ENCODE measurements at regions of chr2 and their contacts with region 1.

Region 1: GRCh38 chr2:32010670-32011484 is at the start of gene MEMO1:
- DNase-seq: peak; percentile 89
- H3K4me3 Mint-ChIP-seq: peak within 1 kb of the TSS; percentile 92
- H3K27ac Mint-ChIP-seq: peak within 1 kb of the TSS; percentile 97
- H3K4me1 Mint-ChIP-seq: peaks cover 41% of the 10 kb centered on the region
- H3K27me3 Mint-ChIP-seq: no peaks in the 10 kb centered on the region
- total RNA-seq, gene MEMO1: 66.6 and 71.3 TPM in 2 replicates

Region 2: DNA sequence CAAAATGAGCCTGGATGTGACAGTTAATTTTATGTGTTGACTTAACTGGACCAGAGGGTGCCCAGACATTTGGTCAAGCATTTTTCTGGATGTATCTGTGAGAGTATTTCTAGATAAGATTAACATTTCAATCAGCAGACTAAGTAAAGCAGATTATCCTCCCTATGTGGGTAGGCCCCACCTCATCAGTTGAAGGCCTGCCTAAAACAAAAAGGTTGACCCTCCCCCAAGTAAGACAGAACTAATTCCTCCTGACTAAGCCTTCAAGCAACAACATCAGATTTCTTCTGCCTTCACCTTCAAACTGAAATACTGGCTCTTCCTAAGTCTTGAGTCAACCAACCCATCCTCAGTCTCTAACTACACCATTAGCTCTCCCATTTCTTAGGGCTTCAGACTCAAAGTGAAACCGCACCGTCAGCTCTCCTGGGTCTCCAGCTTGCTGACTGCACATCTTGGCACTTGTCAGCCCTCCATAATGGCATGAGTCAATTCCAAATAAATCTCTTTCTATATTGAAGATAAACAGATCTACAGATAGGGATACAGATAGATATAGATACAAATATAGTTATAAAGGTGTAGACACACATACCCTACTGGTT is 48.0 kb before region 1 on chr2:
- intact Hi-C with region 1: loop called (anchors 5 kb)
- DNase-seq: peak; percentile 3
- H3K4me3 Mint-ChIP-seq: no peak overlapping the region
- H3K27ac Mint-ChIP-seq: peak overlapping the region; percentile 82
- H3K4me1 Mint-ChIP-seq: peaks cover 43% of the 10 kb centered on the region
- H3K27me3 Mint-ChIP-seq: no peaks in the 10 kb centered on the region

Region 3: DNA sequence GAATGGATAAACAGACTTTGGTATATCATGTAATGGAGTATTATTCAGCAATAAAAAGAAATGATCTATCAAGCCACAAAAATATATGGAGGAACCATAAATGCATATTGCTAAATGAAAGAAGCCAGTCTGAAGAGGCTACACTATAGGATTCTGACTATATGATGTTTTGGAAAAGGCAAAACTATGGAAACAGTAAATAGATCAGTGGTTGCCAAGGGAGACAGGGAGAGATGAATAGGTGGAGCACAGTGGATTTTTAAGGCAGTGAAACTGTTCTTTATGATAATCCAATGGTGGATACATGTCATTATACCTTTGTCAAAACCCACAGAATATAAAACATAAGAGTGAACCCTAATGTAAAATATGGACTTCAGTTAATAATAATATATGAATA is 113.8 kb after region 1 on chr2:
- intact Hi-C with region 1: no loop called
- DNase-seq: no peak
- H3K4me3 Mint-ChIP-seq: no peak overlapping the region
- H3K27ac Mint-ChIP-seq: no peak overlapping the region
- H3K4me1 Mint-ChIP-seq: peaks cover 15% of the 10 kb centered on the region
- H3K27me3 Mint-ChIP-seq: no peaks in the 10 kb centered on the region

Region 4: GRCh38 chr2:32135409-32135808 is 124.5 kb after region 1 on chr2:
- intact Hi-C with region 1: loop called (anchors 10 kb)
- DNase-seq: no peak
- H3K4me3 Mint-ChIP-seq: no peak overlapping the region
- H3K27ac Mint-ChIP-seq: no peak overlapping the region
- H3K4me1 Mint-ChIP-seq: no peaks in the 10 kb centered on the region
- H3K27me3 Mint-ChIP-seq: no peaks in the 10 kb centered on the region

Region 5: DNA sequence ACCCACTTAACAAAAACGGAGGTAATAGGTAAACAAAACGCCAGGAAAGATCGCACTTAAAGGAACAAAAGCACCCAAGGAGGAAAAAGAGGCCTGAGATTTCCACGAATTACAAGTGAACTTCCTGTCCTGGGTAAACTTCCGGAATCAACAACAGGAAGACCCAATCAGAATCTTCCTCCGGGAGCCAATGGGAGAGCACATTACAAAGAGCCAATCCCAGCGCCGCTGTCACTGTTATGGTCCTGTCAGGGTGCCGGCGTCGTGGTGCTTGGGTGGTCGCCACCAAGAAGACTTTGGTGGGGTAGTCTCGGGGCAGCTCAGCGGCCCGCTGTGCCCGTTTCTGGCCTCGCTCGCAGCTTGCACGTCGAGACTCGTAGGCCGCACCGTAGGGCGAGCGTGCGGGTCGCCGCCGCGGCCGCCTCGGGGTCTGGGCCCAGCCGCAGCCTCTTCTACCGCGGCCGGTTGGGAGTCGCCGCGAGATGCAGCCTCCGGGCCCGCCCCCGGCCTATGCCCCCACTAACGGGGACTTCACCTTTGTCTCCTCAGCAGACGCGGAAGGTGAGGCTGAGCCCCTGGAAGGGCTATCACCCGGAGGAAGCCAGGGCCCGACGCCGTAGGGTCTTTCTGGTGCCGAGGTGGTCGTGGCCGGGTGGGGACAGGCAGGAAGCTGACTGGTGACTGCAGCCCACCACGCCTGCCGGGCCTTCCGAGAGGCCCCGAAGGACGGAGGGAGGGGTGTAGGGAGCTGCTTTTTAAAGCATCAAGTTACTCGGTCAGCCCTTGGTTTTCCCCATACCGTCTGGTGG is 267.0 kb after region 1 on chr2 and contains the start of gene YIPF4:
- intact Hi-C with region 1: loop called (anchors 1 kb)
- DNase-seq: peak; percentile 84
- H3K4me3 Mint-ChIP-seq: peak within 1 kb of the TSS; percentile 89
- H3K27ac Mint-ChIP-seq: peak within 1 kb of the TSS; percentile 85
- H3K4me1 Mint-ChIP-seq: peaks cover 13% of the 10 kb centered on the region
- H3K27me3 Mint-ChIP-seq: peaks cover 4% of the 10 kb centered on the region
- total RNA-seq, gene YIPF4: 39.4 and 42.9 TPM in 2 replicates